ENCODE measurements at regions of chr18 and their contacts with region 1.

Region 1: GRCh38 chr18:35071819-35072247 is 30.6 kb downstream of the MAPRE2 start:
- DNase-seq: no peak
- ATAC-seq: no peak
- H3K4me3 Mint-ChIP-seq: no peak overlapping the region
- H3K27ac Mint-ChIP-seq: peak overlapping the region; percentile 54
- H3K4me1 Mint-ChIP-seq: peaks cover 44% of the 10 kb centered on the region
- H3K27me3 Mint-ChIP-seq: no peaks in the 10 kb centered on the region
- CTCF ChIP-seq: no peak

Region 2: GRCh38 chr18:35050028-35050546 is 21.7 kb before region 1 on chr18:
- CTCF ChIA-PET with region 1: no interaction called
- POLR2A ChIA-PET with region 1: no interaction called
- intact Hi-C with region 1: loop called (anchors 2 kb)
- DNase-seq: no peak
- ATAC-seq: peak; percentile 41
- H3K4me3 Mint-ChIP-seq: peak overlapping the region; percentile 71
- H3K27ac Mint-ChIP-seq: peak overlapping the region; percentile 95
- H3K4me1 Mint-ChIP-seq: peaks cover 79% of the 10 kb centered on the region
- H3K27me3 Mint-ChIP-seq: no peaks in the 10 kb centered on the region
- CTCF ChIP-seq: no peak

Region 3: DNA sequence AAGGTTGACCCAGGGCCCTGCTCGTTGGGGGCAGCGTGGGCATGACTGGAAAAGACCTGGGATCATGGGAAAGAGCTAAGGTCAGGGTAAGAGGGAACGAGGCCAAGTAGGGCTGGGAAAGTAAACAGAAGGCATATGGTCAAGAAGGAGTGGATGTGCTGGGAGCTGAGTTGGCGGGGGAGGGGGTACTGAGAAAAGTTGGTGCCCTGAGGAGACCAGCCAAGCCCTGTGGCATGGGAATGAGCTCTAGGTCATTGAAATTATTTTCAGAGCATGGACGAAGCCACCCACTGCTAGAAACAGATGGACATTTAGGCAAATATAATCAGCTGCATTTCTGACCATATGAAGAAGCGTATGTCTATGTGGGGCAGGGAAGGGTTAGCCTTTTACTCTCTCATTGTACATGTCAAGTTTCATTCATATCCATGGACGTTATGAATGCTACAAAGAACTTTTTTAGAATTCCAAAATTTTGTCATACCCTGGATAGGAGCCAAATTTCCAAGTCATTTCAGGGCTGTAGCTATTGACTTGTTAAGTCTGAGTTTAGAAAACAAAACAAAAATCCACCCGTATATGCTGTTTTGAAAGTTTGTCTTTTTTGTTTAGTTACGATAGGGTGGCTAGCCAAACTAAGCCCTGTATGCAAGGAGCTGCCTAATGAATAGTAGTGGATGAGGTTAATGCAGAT is 11.6 kb before region 1 on chr18:
- CTCF ChIA-PET with region 1: interaction called, 3 read pairs
- POLR2A ChIA-PET with region 1: no interaction called
- intact Hi-C with region 1: loop called (anchors 1 kb)
- DNase-seq: no peak
- ATAC-seq: no peak
- H3K4me3 Mint-ChIP-seq: no peak overlapping the region
- H3K27ac Mint-ChIP-seq: no peak overlapping the region
- H3K4me1 Mint-ChIP-seq: peaks cover 46% of the 10 kb centered on the region
- H3K27me3 Mint-ChIP-seq: no peaks in the 10 kb centered on the region
- CTCF ChIP-seq: no peak

Region 4: GRCh38 chr18:35085450-35086380 is 13.9 kb after region 1 on chr18:
- CTCF ChIA-PET with region 1: interaction called, 3 read pairs
- POLR2A ChIA-PET with region 1: no interaction called
- intact Hi-C with region 1: loop called (anchors 2 kb)
- DNase-seq: no peak
- ATAC-seq: no peak
- H3K4me3 Mint-ChIP-seq: no peak overlapping the region
- H3K27ac Mint-ChIP-seq: no peak overlapping the region
- H3K4me1 Mint-ChIP-seq: peaks cover 16% of the 10 kb centered on the region
- H3K27me3 Mint-ChIP-seq: no peaks in the 10 kb centered on the region
- CTCF ChIP-seq: no peak

Region 5: GRCh38 chr18:35095983-35096676 is 24.3 kb after region 1 on chr18:
- CTCF ChIA-PET with region 1: no interaction called
- POLR2A ChIA-PET with region 1: no interaction called
- intact Hi-C with region 1: no loop called
- DNase-seq: no peak
- ATAC-seq: peak; percentile 88
- H3K4me3 Mint-ChIP-seq: peak overlapping the region; percentile 55
- H3K27ac Mint-ChIP-seq: peak overlapping the region; percentile 86
- H3K4me1 Mint-ChIP-seq: peaks cover 35% of the 10 kb centered on the region
- H3K27me3 Mint-ChIP-seq: no peaks in the 10 kb centered on the region
- CTCF ChIP-seq: no peak

Region 6: DNA sequence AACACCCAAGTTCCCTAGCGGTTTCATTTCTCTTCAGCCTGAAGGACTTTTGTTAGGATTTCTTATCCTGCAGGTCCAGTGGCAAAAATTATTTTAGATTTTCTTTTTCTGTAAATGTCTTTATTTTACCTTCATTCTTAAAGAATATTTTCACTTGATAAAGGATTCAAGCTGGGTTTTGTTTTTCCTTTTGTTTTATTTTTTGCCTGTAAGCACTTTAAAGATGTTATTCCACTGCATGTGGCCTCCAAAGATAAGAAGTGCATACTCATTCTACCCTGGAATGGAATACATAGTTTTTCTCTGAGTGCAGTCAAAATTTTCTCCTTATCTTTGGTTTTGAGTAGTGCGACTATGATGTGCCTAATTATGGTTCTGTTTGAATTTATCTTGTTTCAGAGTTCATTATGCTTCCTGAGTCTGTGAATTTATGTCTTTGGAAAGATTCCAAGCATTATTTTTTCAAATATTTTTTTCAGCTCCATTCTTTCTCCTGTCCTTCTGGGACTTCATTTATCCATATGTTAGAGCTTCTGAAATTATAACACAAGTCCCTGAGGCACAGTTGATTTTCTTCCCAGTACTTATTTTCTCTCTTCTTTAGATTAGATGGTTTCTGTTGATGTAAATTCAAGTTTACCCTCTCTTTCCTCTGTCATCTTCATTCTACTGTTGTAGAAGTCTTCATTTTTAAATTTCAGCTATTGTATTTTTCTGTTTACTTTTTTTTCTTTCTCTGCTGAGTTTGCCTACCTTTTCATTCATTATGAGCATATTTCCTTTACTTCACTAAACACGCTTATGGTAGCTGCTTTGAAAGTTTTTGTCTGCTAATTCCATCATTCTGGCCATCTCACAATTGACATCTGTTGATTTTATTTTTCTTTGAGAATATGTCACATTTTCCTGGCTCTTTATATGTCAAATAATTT is 39.0 kb after region 1 on chr18:
- CTCF ChIA-PET with region 1: no interaction called
- POLR2A ChIA-PET with region 1: no interaction called
- intact Hi-C with region 1: loop called (anchors 5 kb)
- DNase-seq: no peak
- ATAC-seq: no peak
- H3K4me3 Mint-ChIP-seq: no peak overlapping the region
- H3K27ac Mint-ChIP-seq: no peak overlapping the region
- H3K4me1 Mint-ChIP-seq: peaks cover 59% of the 10 kb centered on the region
- H3K27me3 Mint-ChIP-seq: no peaks in the 10 kb centered on the region
- CTCF ChIP-seq: no peak

Region 7: GRCh38 chr18:35122586-35123224 is 50.9 kb after region 1 on chr18:
- CTCF ChIA-PET with region 1: interaction called, 5 read pairs
- POLR2A ChIA-PET with region 1: no interaction called
- intact Hi-C with region 1: loop called (anchors 5 kb)
- DNase-seq: no peak
- ATAC-seq: peak; percentile 91
- H3K4me3 Mint-ChIP-seq: peak overlapping the region; percentile 4
- H3K27ac Mint-ChIP-seq: peak overlapping the region; percentile 46
- H3K4me1 Mint-ChIP-seq: peaks cover 45% of the 10 kb centered on the region
- H3K27me3 Mint-ChIP-seq: no peaks in the 10 kb centered on the region
- CTCF ChIP-seq: no peak